SK-N-SH (cell line): ENCODE measurements at regions of chr13 and their contacts with region 1.

Region 1: DNA sequence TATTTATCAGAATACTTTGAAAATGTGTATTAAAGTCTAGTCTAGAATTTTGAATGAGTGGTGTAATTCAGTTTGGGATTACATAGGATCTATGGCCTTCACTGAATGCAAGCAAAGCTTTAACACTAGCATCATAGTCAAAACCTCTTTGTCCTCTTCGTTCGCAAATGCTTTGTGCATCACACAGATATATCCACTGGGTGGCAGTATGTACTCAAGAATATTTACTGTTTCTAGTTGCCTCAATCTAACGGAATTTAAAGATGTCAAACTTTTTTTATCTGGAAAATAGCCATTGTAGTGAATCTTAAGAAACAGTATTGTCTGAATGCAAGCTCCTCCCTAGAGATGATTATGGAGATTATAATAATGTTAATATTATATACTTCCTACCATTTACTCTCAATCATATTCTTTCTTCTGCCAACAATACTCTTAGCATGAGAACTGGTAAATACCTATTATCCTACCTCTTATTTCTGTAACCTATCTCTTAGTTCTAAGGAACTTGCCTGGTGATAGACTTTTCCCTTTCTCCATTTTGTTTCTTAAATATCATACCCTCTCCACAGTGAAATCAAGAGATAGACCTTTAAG is 25.8 kb downstream of the LACC1 start:
- DNase-seq: peak; percentile 63
- H3K4me3 ChIP-seq: no peak overlapping the region
- H3K27ac ChIP-seq: no peak overlapping the region
- H3K4me1 ChIP-seq: peaks cover 0 to 6% of the 10 kb centered on the region in 2 experiments; a peak in 1 of 4 replicates
- H3K27me3 ChIP-seq: no peaks in the 10 kb centered on the region
- CTCF ChIP-seq: peak; percentile 83
- EP300 ChIP-seq: no peak
- RAD21 ChIP-seq: peak; percentile 93

Region 2: GRCh38 chr13:43273362-43273761 is 632.2 kb before region 1 on chr13:
- CTCF ChIA-PET with region 1: no interaction called
- POLR2A ChIA-PET with region 1: no interaction called
- DNase-seq: no peak
- H3K4me3 ChIP-seq: no peak overlapping the region
- H3K27ac ChIP-seq: peak overlapping the region in 1 of 2 experiments; percentile 41; a peak in 1 of 4 replicates
- H3K4me1 ChIP-seq: peaks cover 0 to 41% of the 10 kb centered on the region in 2 experiments; a peak in 3 of 4 replicates
- H3K27me3 ChIP-seq: no peaks in the 10 kb centered on the region
- CTCF ChIP-seq: no peak
- EP300 ChIP-seq: peak in 1 of 2 experiments; percentile 89; a peak in 2 of 4 replicates
- RAD21 ChIP-seq: no peak

Region 3: DNA sequence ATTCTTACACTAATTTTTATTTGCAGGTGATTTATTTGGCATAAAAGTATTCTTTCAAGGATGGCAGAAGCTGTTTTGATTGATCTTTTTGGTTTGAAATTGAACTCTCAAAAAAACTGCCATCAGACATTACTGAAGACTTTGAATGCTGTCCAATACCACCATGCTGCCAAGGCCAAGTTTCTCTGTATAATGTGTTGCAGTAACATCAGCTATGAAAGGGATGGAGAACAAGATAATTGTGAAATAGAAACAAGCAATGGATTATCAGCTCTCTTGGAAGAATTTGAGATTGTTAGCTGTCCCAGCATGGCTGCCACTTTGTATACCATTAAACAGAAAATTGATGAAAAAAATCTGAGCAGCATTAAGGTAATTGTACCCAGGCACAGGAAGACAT is 24.6 kb before region 1 on chr13:
- CTCF ChIA-PET with region 1: interaction called, 11 read pairs
- POLR2A ChIA-PET with region 1: no interaction called
- DNase-seq: no peak
- H3K4me3 ChIP-seq: no peak overlapping the region
- H3K27ac ChIP-seq: no peak overlapping the region
- H3K4me1 ChIP-seq: peaks cover 0 to 12% of the 10 kb centered on the region in 2 experiments; a peak in 3 of 4 replicates
- H3K27me3 ChIP-seq: no peaks in the 10 kb centered on the region
- CTCF ChIP-seq: no peak
- EP300 ChIP-seq: no peak
- RAD21 ChIP-seq: no peak

Region 4: GRCh38 chr13:43924549-43925245 is 19.2 kb after region 1 on chr13:
- CTCF ChIA-PET with region 1: interaction called, 15 read pairs
- POLR2A ChIA-PET with region 1: no interaction called
- DNase-seq: no peak
- H3K4me3 ChIP-seq: no peak overlapping the region
- H3K27ac ChIP-seq: no peak overlapping the region
- H3K4me1 ChIP-seq: no peaks in the 10 kb centered on the region
- H3K27me3 ChIP-seq: no peaks in the 10 kb centered on the region
- CTCF ChIP-seq: no peak
- EP300 ChIP-seq: no peak
- RAD21 ChIP-seq: no peak

Region 5: GRCh38 chr13:44458313-44458975 is 552.9 kb after region 1 on chr13:
- CTCF ChIA-PET with region 1: interaction called, 20 read pairs
- POLR2A ChIA-PET with region 1: no interaction called
- DNase-seq: no peak
- H3K4me3 ChIP-seq: no peak overlapping the region
- H3K27ac ChIP-seq: no peak overlapping the region
- H3K4me1 ChIP-seq: peaks cover 0 to 3% of the 10 kb centered on the region in 2 experiments; a peak in 2 of 4 replicates
- H3K27me3 ChIP-seq: no peaks in the 10 kb centered on the region
- CTCF ChIP-seq: no peak
- EP300 ChIP-seq: no peak
- RAD21 ChIP-seq: no peak

Region 6: DNA sequence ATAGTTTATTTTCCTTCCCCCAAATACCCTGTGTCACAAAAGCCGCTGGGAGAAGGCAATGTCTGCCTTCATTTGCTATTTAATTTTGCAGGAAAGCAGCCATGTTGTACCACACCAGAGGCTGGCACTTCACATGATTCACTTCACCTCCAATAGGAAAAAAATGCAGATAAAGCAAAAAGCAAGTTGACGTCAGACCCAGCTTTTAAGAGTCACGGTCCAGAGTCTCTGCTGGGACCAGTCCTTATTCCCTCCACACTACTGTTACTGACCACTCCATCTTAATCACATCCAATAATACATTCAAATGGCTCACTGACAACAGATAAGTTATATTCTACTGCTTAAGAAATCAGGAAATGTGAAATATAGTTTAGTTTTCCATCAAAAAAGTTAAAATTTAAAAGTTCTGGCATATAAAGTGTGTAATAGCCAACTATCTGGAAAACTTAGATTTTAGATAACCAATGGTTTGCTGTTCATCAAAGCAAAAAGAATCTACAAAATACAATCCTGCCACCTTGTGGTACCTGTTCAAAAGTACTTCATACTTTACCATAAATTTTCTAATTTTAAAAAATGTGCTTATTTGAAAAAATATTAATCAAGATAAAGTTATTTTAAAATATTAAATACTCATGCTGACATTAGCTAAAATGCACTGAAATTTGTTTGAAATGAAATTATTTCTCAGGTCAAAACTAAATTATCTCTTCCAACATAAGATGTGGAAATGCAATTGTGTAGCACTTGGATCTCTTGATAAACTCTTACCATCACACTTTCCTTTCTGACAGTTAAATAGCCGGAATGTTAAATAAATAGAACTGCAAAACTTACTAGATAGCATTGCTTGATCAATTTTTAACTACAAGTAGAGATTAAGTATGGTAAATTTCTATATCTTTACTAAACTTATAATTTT is 565.4 kb after region 1 on chr13:
- CTCF ChIA-PET with region 1: interaction called, 47 read pairs
- POLR2A ChIA-PET with region 1: no interaction called
- DNase-seq: no peak
- H3K4me3 ChIP-seq: no peak overlapping the region; a peak in 2 of 4 replicates
- H3K27ac ChIP-seq: peak overlapping the region; percentile 18 to 84
- H3K4me1 ChIP-seq: peaks cover 10 to 41% of the 10 kb centered on the region in 2 experiments; a peak in 3 of 4 replicates
- H3K27me3 ChIP-seq: no peaks in the 10 kb centered on the region
- CTCF ChIP-seq: peak; percentile 61
- EP300 ChIP-seq: no peak
- RAD21 ChIP-seq: peak; percentile 76